PC-9 (cell line): ENCODE measurements at regions of chr19 and their contacts with region 1.

Region 1: DNA sequence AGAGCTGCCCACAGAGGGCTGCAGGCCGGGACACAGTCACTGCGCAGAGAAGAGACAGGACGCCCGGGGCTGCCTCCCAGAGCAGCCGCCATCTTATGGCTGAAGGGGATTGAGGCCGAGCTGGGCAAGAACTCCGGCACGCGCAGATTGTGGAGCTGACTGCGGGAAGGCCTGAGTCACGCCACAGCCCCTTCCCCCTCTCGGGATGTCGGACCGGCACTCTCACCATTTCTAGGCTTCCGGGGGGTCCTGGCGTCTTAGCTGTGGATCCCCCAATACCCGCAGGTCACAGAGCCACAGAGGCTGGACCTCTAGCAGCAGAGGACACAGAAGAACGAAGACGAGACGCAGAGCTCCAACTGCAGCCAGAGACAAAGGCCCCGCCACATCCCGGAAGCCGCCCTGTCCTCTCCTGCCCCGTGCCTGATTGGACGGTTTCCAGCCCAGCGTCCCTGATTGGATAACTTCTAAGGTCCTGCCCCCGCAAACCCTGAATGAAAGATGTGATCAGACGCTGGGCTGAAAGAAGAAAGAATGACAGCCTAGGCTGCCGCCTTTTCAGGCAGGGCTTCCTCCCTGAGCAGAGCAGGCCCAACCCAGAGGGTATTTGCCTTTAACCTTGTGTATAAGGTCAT is at the start of gene ZNF43:
- DNase-seq: peak; percentile 89
- H3K4me3 ChIP-seq: peak within 1 kb of the TSS; percentile 77
- H3K27ac ChIP-seq: peak within 1 kb of the TSS; percentile 67
- H3K4me1 ChIP-seq: 0 out of 2 replicates have a peak, but pooled peaks cover 3% of the 10 kb centered on the region
- H3K27me3 ChIP-seq: no peaks in the 10 kb centered on the region
- CTCF ChIP-seq: no peak
- total RNA-seq, gene ZNF43: 9.0 and 14.8 TPM in 2 replicates

Region 2: GRCh38 chr19:21505459-21506451 is 330.2 kb before region 1 on chr19 and contains the start of gene ZNF429:
- CTCF ChIA-PET with region 1: no interaction called
- POLR2A ChIA-PET with region 1: no interaction called
- intact Hi-C with region 1: loop called (anchors 5 kb)
- DNase-seq: peak; percentile 81 to 86
- H3K4me3 ChIP-seq: peak within 1 kb of the TSS; percentile 76
- H3K27ac ChIP-seq: peak within 1 kb of the TSS; percentile 30
- H3K4me1 ChIP-seq: peaks cover 6% of the 10 kb centered on the region; the same call in 1 of the 2 replicates
- H3K27me3 ChIP-seq: no peaks in the 10 kb centered on the region
- CTCF ChIP-seq: no peak; the same call in 1 of the 2 replicates
- total RNA-seq, gene ZNF429: 8.5 and 10.0 TPM in 2 replicates

Region 3: DNA sequence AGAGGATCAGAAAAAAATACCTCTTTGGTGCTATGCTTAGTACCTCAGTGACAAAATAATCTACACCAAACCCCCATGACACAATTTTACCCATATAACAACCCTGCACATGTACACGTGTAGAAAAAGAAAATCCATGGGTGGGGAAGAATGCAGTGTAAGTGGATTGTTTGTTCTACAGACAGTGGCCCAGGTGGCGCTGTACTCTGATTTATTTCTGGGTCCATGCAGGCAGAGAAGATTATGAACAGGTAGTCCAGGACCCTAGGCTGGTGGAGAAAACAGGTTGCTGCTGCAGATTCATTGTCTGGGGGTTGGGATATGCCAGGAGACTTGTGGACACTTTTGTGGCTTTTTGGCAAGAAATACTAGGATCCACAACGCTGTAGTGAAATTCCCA is 77.6 kb before region 1 on chr19:
- CTCF ChIA-PET with region 1: no interaction called
- POLR2A ChIA-PET with region 1: no interaction called
- intact Hi-C with region 1: no loop called
- DNase-seq: no peak
- H3K4me3 ChIP-seq: no peak overlapping the region
- H3K27ac ChIP-seq: no peak overlapping the region
- H3K4me1 ChIP-seq: no peaks in the 10 kb centered on the region
- H3K27me3 ChIP-seq: no peaks in the 10 kb centered on the region
- CTCF ChIP-seq: no peak

Region 4: DNA sequence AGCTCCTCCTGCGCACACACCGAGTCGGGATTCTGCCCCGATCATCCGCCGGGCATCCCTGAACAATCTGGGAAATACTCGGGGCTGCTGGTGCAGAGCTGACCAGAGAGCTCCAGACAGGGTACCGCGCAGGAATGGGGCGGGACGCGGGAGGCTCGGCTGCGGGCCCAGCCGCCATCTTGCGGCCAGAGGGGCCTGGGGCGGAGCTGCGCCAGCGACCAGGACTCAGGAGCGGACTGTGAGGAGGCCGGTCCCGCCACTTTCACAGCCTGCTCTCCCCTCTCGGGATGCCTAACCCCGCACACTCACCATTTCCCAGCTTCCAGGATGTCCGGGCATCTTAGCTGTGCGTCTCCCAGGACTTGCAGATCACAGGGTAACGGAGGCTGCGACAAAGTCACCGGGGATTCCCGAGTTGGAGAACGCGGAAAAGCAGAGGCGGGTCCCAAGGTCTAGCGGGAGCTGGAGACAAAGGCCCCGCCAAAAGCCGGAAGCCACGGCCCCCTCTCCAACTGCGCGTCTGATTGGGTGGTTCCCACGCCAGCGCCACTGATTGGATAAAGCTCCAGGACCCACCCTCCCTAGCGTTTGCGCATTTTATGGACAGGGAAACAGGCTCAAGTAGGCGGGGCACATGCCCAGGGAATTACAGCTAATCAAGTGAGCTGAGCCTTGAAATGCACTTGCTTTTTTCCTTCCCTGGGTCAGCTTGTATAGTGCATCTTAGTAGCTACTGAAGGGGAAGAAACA is 15.8 kb after region 1 on chr19:
- CTCF ChIA-PET with region 1: no interaction called
- POLR2A ChIA-PET with region 1: interaction called, 10 read pairs
- intact Hi-C with region 1: no loop called
- DNase-seq: peak; percentile 83
- H3K4me3 ChIP-seq: peak overlapping the region; percentile 67
- H3K27ac ChIP-seq: no peak overlapping the region
- H3K4me1 ChIP-seq: no peaks in the 10 kb centered on the region; the same call in 1 of the 2 replicates
- H3K27me3 ChIP-seq: no peaks in the 10 kb centered on the region
- CTCF ChIP-seq: no peak